ENCODE measurements at regions of chr2 and their contacts with region 1.

Region 1: DNA sequence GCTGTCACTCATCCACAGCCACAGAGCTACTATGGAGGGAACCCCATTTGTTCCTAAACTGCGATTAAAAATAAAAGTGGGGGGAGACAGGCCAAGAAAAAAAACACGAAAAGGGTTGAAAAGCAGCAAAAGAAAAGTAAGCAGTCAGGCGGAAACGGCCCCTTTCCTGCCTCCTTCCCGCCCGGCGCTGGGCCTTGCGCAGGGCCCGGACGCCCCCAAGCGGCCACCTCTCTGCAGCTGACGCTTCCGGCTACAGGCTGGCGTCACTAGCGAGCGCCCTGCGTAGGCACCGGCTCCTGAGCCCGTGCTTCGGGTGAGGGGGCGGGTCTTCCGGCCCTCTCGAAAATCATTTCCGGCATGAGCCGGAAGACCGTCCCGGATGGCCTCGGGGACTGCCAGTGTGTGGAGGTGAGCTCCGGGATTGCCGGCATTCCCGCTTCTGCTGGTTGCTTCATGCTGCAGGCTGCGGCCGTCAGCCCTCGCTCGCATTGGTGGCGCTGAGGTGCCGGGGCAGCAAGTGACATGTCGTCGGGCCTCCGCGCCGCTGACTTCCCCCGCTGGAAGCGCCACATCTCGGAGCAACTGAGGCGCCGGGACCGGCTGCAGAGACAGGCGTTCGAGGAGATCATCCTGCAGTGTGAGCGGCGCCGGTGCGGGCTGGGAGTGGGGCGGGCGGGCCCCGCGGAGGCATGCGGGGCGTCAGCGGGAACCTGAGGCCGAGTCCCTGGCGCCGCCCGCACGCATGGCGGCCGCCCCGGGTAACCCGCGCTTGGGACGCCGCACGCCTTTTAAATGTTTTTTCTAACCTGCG is at the start of gene ATG16L1:
- DNase-seq: peak; percentile 88
- ATAC-seq: peak; percentile 98
- H3K4me3 Mint-ChIP-seq: peak within 1 kb of the TSS; percentile 92
- H3K27ac Mint-ChIP-seq: peak within 1 kb of the TSS; percentile 91
- H3K4me1 Mint-ChIP-seq: peaks cover 53% of the 10 kb centered on the region
- H3K27me3 Mint-ChIP-seq: no peaks in the 10 kb centered on the region
- CTCF ChIP-seq: peak; percentile 57
- total RNA-seq, gene ATG16L1: 39.0 and 49.9 TPM in 2 replicates

Region 2: GRCh38 chr2:232550354-232551249 is 700.9 kb before region 1 on chr2 and contains the starts of genes EIF4E2 and TIGD1:
- CTCF ChIA-PET with region 1: no interaction called
- POLR2A ChIA-PET with region 1: no interaction called
- intact Hi-C with region 1: loop called (anchors 1 kb)
- DNase-seq: peak; percentile 86
- ATAC-seq: peak; percentile 85
- H3K4me3 Mint-ChIP-seq: peak within 1 kb of the TSS; percentile 98
- H3K27ac Mint-ChIP-seq: peak within 1 kb of the TSS; percentile 99
- H3K4me1 Mint-ChIP-seq: peaks cover 63% of the 10 kb centered on the region
- H3K27me3 Mint-ChIP-seq: no peaks in the 10 kb centered on the region
- CTCF ChIP-seq: no peak
- total RNA-seq, gene EIF4E2: 63.2 and 67.2 TPM in 2 replicates
- total RNA-seq, gene TIGD1: 8.1 and 8.8 TPM in 2 replicates

Region 3: GRCh38 chr2:232761301-232761907 is 490.1 kb before region 1 on chr2:
- CTCF ChIA-PET with region 1: no interaction called
- POLR2A ChIA-PET with region 1: no interaction called
- intact Hi-C with region 1: loop called (anchors 1 kb)
- DNase-seq: no peak
- ATAC-seq: peak; percentile 54
- H3K4me3 Mint-ChIP-seq: no peak overlapping the region
- H3K27ac Mint-ChIP-seq: no peak overlapping the region
- H3K4me1 Mint-ChIP-seq: no peaks in the 10 kb centered on the region
- H3K27me3 Mint-ChIP-seq: no peaks in the 10 kb centered on the region
- CTCF ChIP-seq: no peak

Region 4: GRCh38 chr2:233029321-233029720 is 222.2 kb before region 1 on chr2:
- CTCF ChIA-PET with region 1: interaction called, 4 read pairs
- POLR2A ChIA-PET with region 1: no interaction called
- intact Hi-C with region 1: loop called (anchors 2 kb)
- DNase-seq: no peak
- ATAC-seq: no peak
- H3K4me3 Mint-ChIP-seq: no peak overlapping the region
- H3K27ac Mint-ChIP-seq: no peak overlapping the region
- H3K4me1 Mint-ChIP-seq: no peaks in the 10 kb centered on the region
- H3K27me3 Mint-ChIP-seq: no peaks in the 10 kb centered on the region
- CTCF ChIP-seq: no peak

Region 5: GRCh38 chr2:233185963-233186362 is 65.5 kb before region 1 on chr2:
- CTCF ChIA-PET with region 1: interaction called, 8 read pairs
- POLR2A ChIA-PET with region 1: interaction called, 5 read pairs
- intact Hi-C with region 1: loop called (anchors 2 kb)
- DNase-seq: no peak
- ATAC-seq: peak; percentile 65
- H3K4me3 Mint-ChIP-seq: peak overlapping the region; percentile 56
- H3K27ac Mint-ChIP-seq: peak overlapping the region; percentile 83
- H3K4me1 Mint-ChIP-seq: peaks cover 30% of the 10 kb centered on the region
- H3K27me3 Mint-ChIP-seq: no peaks in the 10 kb centered on the region
- CTCF ChIP-seq: no peak

Region 6: DNA sequence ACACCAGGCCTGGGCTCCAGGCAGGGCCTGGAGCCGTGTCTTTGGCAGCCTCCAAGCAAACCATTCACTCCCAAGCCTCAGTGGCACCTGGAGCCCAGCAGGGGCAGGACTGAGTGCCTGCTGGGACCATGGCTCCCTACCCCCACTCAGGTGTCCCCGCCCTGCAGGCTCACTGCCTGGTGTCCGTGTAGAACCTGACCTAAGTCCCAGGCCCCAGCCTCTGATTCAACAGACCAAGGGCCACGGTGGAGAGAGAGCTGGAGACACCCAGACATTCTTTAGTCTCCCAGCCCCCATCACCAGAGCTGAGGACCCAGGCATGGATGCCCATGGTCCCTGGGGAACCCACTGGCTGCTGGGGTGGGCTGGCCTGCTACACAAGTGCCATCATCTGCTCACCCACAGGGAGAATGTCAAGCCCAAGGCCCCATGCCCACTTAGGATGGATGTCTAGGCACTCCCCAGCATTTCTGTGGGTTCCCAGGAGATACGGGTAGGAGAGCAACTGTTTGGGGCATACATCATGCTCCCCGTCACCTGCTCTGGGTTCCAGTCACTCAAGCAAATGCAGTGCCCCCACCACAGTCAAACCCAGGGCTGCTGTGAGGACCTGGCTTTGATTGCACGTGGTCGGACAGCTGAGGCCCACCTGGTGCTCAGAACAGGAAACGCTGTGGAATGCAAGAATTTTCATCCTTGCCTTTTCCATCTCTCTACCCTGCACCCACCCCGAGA is 43.0 kb before region 1 on chr2:
- CTCF ChIA-PET with region 1: no interaction called
- POLR2A ChIA-PET with region 1: no interaction called
- intact Hi-C with region 1: no loop called
- DNase-seq: no peak
- ATAC-seq: peak; percentile 42
- H3K4me3 Mint-ChIP-seq: no peak overlapping the region
- H3K27ac Mint-ChIP-seq: peak overlapping the region; percentile 38
- H3K4me1 Mint-ChIP-seq: peaks cover 15% of the 10 kb centered on the region
- H3K27me3 Mint-ChIP-seq: no peaks in the 10 kb centered on the region
- CTCF ChIP-seq: no peak

Region 7: DNA sequence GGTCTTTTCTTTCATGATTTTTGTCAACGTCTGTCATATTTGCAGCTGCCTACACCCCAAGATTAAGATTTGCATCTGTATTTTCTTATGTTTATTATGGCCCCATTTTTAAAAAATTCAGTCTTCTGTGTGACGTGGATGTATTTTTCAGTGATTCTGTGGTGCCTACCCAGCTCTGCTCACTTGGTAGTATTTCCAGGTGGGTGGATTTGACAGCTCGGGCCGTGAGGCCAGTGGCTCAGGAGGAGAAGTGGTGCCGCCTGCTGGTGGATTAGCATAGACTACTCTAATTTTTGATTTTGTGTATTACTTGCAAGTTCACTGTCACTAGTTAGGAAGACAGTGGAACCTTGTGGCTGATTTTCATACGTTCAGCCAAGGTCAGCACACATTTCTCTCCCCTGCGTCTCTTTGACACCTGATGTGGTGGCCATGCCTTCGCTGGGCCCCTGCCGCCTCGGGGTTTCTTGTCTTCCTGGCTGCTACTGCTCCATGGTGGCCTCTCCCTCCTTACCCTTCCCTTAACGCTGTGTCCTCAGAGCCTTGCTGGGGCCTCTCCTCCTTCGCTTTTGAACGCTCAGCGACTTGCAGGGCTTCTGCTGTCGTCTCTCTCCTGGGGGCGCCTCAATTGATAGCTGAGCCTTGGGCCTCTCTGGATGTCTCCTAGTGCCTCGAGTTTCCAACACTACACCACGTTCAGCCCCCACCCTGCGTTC is 192.1 kb after region 1 on chr2:
- CTCF ChIA-PET with region 1: interaction called, 7 read pairs
- POLR2A ChIA-PET with region 1: interaction called, 3 read pairs
- intact Hi-C with region 1: loop called (anchors 5 kb)
- DNase-seq: peak; percentile 58
- ATAC-seq: peak; percentile 92
- H3K4me3 Mint-ChIP-seq: no peak overlapping the region
- H3K27ac Mint-ChIP-seq: peak overlapping the region; percentile 37
- H3K4me1 Mint-ChIP-seq: peaks cover 14% of the 10 kb centered on the region
- H3K27me3 Mint-ChIP-seq: no peaks in the 10 kb centered on the region
- CTCF ChIP-seq: peak; percentile 26

Measured in activated B cell treated with CpG ODN at 0.5 μM for 24 hours (primary cell).